A673 (cell line): ENCODE measurements at regions of chr18 and their contacts with region 1.

Region 1: GRCh38 chr18:66560092-66560491 is 43.8 kb downstream of the CDH19 start:
- DNase-seq: peak; percentile 67
- H3K4me3 ChIP-seq: no peak overlapping the region
- H3K27ac ChIP-seq: no peak overlapping the region
- H3K4me1 ChIP-seq: no peaks in the 10 kb centered on the region
- H3K27me3 ChIP-seq: no peaks in the 10 kb centered on the region
- CTCF ChIP-seq: peak; percentile 66

Region 2: DNA sequence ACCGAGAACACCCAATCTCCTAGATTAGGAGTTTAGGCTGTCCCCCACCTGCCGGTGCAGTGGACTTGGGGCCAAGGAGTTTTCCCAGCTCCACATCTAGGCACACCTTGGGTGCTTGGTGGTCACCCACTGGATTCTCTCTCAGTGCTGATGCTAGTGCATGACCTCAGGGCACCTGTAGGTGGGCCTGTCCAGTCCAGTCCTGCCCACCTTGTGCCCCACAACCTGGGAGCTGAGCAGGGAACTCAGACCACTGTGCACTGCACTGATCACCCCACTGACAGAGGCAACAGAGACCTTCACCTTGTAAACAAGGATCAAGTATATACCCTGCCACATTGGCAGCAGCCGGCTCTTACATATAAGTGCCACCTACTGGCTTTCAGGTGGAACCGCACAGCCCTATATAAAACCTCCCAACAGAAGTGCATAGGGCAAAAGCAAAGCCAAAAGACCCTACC is 56.5 kb after region 1 on chr18:
- CTCF ChIA-PET with region 1: no interaction called
- POLR2A ChIA-PET with region 1: no interaction called
- intact Hi-C with region 1: loop called (anchors 2 kb)
- DNase-seq: peak; percentile 59
- H3K4me3 ChIP-seq: no peak overlapping the region
- H3K27ac ChIP-seq: no peak overlapping the region
- H3K4me1 ChIP-seq: no peaks in the 10 kb centered on the region
- H3K27me3 ChIP-seq: no peaks in the 10 kb centered on the region
- CTCF ChIP-seq: peak; percentile 85

Region 3: GRCh38 chr18:66749030-66749429 is 188.9 kb after region 1 on chr18:
- CTCF ChIA-PET with region 1: interaction called, 5 read pairs
- POLR2A ChIA-PET with region 1: no interaction called
- intact Hi-C with region 1: loop called (anchors 2 kb)
- DNase-seq: peak; percentile 51
- H3K4me3 ChIP-seq: no peak overlapping the region
- H3K27ac ChIP-seq: peak overlapping the region; percentile 12
- H3K4me1 ChIP-seq: peaks cover 14% of the 10 kb centered on the region
- H3K27me3 ChIP-seq: no peaks in the 10 kb centered on the region
- CTCF ChIP-seq: peak; percentile 47; the same call in 1 of the 2 replicates

Region 4: DNA sequence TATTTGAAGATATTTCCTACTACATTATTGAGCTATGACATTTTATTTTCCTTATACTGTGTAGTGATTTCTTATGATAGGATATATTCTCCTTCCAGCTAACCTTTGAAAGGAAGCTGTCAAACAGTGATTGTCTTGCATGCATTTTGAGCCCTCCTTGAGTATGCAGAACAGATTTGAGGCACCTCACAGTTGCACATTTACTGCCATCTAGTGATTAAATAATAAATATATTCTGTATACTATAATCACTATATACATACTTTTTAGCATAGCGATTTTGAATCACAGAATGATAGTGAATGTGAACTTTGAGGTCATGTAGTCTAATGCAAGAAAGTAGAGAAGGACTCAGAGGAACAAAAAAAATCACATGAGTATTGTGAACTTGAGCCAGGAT is 312.2 kb after region 1 on chr18:
- CTCF ChIA-PET with region 1: no interaction called
- POLR2A ChIA-PET with region 1: no interaction called
- intact Hi-C with region 1: loop called (anchors 10 kb)
- DNase-seq: peak; percentile 55
- H3K4me3 ChIP-seq: no peak overlapping the region
- H3K27ac ChIP-seq: no peak overlapping the region
- H3K4me1 ChIP-seq: peaks cover 5% of the 10 kb centered on the region
- H3K27me3 ChIP-seq: no peaks in the 10 kb centered on the region
- CTCF ChIP-seq: peak; percentile 52; the same call in 1 of the 2 replicates